ENCODE measurements at regions of chr10 and their contacts with region 1.

Region 1: DNA sequence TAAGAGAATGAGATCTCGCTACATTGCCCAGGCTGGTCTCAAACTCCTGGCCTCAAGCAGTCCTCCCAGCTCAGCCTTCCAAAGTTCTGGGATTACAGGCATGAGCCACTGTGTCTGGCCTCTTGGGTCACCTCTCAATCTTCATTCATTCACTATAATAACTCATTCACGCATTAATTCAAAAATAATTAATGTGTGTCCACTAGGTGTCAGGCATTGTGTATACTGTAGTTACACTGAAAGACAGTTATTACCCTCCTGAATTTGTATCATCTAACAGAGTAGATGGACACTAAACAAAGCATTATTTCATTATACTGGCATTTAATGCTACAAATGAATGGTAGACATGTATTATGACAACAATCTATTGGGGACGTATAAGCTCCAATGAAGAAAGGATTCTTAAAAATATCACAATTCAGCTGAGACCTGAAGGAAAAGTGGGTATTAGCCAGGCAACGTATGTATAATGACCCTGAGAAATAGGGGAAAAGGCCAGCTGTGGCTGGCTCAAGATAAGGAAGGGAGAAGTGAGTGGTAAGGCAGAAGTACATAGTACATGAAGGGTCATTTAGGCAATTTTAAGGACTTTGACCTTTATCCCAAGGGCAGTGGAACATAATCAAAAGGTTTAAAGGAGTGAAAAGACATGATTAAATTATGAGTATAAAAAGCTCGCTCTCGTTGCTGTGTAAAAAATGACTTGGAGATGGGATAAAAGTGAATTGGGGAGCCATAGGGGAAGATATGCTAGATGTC is 150.7 kb downstream of the BTAF1 start:
- DNase-seq: no peak
- H3K4me3 Mint-ChIP-seq: no peak overlapping the region
- H3K27ac Mint-ChIP-seq: no peak overlapping the region
- H3K4me1 Mint-ChIP-seq: no peaks in the 10 kb centered on the region
- H3K27me3 Mint-ChIP-seq: no peaks in the 10 kb centered on the region
- CTCF ChIP-seq: no peak

Region 2: GRCh38 chr10:91923371-91924211 is 150.7 kb before region 1 on chr10 and contains the start of gene BTAF1:
- CTCF ChIA-PET with region 1: no interaction called
- intact Hi-C with region 1: no loop called
- DNase-seq: peak; percentile 76
- H3K4me3 Mint-ChIP-seq: peak within 1 kb of the TSS; percentile 79
- H3K27ac Mint-ChIP-seq: peak within 1 kb of the TSS; percentile 92
- H3K4me1 Mint-ChIP-seq: peaks cover 14% of the 10 kb centered on the region
- H3K27me3 Mint-ChIP-seq: no peaks in the 10 kb centered on the region
- CTCF ChIP-seq: no peak
- total RNA-seq, gene BTAF1: 29.2 and 30.7 TPM in 2 replicates

Region 3: DNA sequence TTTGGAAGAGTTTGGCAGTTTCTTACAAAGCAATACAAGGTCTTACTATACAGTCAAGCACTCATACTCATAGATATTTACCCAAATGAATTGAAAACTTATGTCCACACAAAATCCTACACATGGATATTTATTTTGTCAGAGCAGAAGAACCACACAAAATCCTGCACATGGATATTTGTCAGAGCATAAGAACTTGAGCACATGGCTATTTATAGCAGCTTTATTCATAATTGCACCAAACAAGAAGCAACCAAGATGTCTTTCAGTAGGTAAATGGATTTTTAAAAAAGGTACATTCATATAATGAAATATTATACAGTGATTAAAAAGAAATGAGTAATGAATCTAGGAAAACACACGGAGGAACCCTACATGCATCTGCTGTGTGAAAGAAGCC is 35.4 kb before region 1 on chr10:
- CTCF ChIA-PET with region 1: no interaction called
- intact Hi-C with region 1: no loop called
- DNase-seq: no peak
- H3K4me3 Mint-ChIP-seq: no peak overlapping the region
- H3K27ac Mint-ChIP-seq: peak overlapping the region; percentile 50
- H3K4me1 Mint-ChIP-seq: no peaks in the 10 kb centered on the region
- H3K27me3 Mint-ChIP-seq: no peaks in the 10 kb centered on the region
- CTCF ChIP-seq: no peak

Region 4: GRCh38 chr10:92432596-92432995 is 358.3 kb after region 1 on chr10:
- CTCF ChIA-PET with region 1: interaction called, 3 read pairs
- intact Hi-C with region 1: loop called (anchors 1 kb)
- DNase-seq: no peak
- H3K4me3 Mint-ChIP-seq: no peak overlapping the region
- H3K27ac Mint-ChIP-seq: no peak overlapping the region
- H3K4me1 Mint-ChIP-seq: no peaks in the 10 kb centered on the region
- H3K27me3 Mint-ChIP-seq: no peaks in the 10 kb centered on the region
- CTCF ChIP-seq: no peak

Measured in Calu3 (cell line).